ENCODE measurements at regions of chr3 and their contacts with region 1.

Region 1: GRCh38 chr3:155870133-155870944 is at the start of gene GMPS:
- DNase-seq: peak; percentile 84
- ATAC-seq: peak; percentile 93
- H3K4me3 ChIP-seq: peak within 1 kb of the TSS; percentile 98 to 99 (median 99)
- H3K27ac ChIP-seq: peak within 1 kb of the TSS; percentile 98
- H3K4me1 ChIP-seq: peaks cover 51% of the 10 kb centered on the region
- H3K27me3 ChIP-seq: no peaks in the 10 kb centered on the region; a peak in 1 of 5 replicates
- CTCF ChIP-seq: peak; percentile 85
- EP300 ChIP-seq: no peak
- POLR2A ChIP-seq: peak; percentile 75 to 88
- RAD21 ChIP-seq: peak; percentile 94
- total RNA-seq, gene GMPS: 85.5 and 133 TPM in 2 replicates

Region 2: GRCh38 chr3:155712008-155712407 is 158.3 kb before region 1 on chr3:
- CTCF ChIA-PET with region 1: no interaction called
- POLR2A ChIA-PET with region 1: interaction called, 3 read pairs
- in situ Hi-C with region 1: no loop called
- intact Hi-C with region 1: loop called (anchors 5 kb)
- DNase-seq: no peak
- ATAC-seq: no peak
- H3K4me3 ChIP-seq: no peak overlapping the region
- H3K27ac ChIP-seq: no peak overlapping the region
- H3K4me1 ChIP-seq: peaks cover 40% of the 10 kb centered on the region
- H3K27me3 ChIP-seq: no peaks in the 10 kb centered on the region
- CTCF ChIP-seq: no peak
- EP300 ChIP-seq: no peak
- POLR2A ChIP-seq: no peak
- RAD21 ChIP-seq: no peak

Region 3: GRCh38 chr3:155737844-155738460 is 132.4 kb before region 1 on chr3:
- CTCF ChIA-PET with region 1: no interaction called
- POLR2A ChIA-PET with region 1: interaction called, 6 read pairs
- in situ Hi-C with region 1: no loop called
- intact Hi-C with region 1: loop called (anchors 2 kb)
- DNase-seq: peak; percentile 90
- ATAC-seq: peak; percentile 99
- H3K4me3 ChIP-seq: peak overlapping the region; percentile 51 to 60 (median 52)
- H3K27ac ChIP-seq: peak overlapping the region; percentile 69
- H3K4me1 ChIP-seq: peaks cover 39% of the 10 kb centered on the region
- H3K27me3 ChIP-seq: no peaks in the 10 kb centered on the region; a peak in 1 of 5 replicates
- CTCF ChIP-seq: 0 out of 2 replicates have a peak, but pooled peaks have one; percentile 23
- EP300 ChIP-seq: no peak
- POLR2A ChIP-seq: peak; percentile 43 to 63; a peak in 3 of 4 replicates
- RAD21 ChIP-seq: no peak

Region 4: GRCh38 chr3:155805802-155806618 is 64.3 kb before region 1 on chr3 and contains the start of gene C3orf33:
- CTCF ChIA-PET with region 1: interaction called, 3 read pairs
- POLR2A ChIA-PET with region 1: interaction called, 32 read pairs
- in situ Hi-C with region 1: no loop called
- intact Hi-C with region 1: loop called (anchors 1 kb)
- DNase-seq: peak; percentile 30
- ATAC-seq: peak; percentile 93
- H3K4me3 ChIP-seq: peak within 1 kb of the TSS; percentile 87 to 95 (median 94)
- H3K27ac ChIP-seq: peak within 1 kb of the TSS; percentile 89
- H3K4me1 ChIP-seq: peaks cover 18% of the 10 kb centered on the region
- H3K27me3 ChIP-seq: no peaks in the 10 kb centered on the region
- CTCF ChIP-seq: peak; percentile 89
- EP300 ChIP-seq: peak in 1 of 2 experiments; percentile 3; a peak in 1 of 4 replicates
- POLR2A ChIP-seq: peak; percentile 5 to 44; a peak in 1 of 4 replicates
- RAD21 ChIP-seq: peak; percentile 86
- total RNA-seq, gene C3orf33: 8.2 and 12.6 TPM in 2 replicates

Region 5: DNA sequence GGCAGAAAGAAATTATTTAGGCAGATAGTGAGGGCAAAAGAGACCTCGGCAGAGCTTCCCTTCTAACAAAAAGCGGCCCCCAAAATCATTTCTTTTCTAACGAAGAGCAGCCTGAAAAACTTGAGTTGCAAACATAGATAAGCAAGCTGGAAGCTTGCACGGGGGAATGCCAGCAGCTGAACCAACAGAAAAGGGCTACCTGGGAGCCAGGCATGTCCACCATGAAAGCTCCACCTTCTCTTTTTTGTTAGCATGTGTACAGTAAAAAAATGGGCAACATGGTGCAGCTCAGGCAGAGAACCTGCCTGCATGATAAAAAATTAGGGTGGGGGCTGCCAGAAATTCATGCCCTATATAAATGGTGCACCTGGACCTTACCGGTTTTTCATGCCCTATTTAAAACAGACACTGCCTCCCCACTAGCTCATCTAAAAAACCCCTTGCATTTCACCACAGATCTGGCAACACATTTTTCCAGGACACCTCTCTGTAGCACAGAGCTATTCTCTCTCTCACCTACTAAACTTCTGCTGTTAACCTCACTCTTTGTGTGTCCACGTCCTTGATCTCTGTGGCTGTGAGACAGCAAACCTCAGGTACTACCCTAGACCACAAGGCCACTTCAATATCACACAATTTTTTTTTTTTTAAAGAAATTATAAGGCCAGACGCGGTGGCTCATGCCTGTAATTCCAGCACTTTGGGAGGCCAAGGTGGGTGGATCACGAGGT is 34.8 kb before region 1 on chr3:
- CTCF ChIA-PET with region 1: no interaction called
- POLR2A ChIA-PET with region 1: interaction called, 3 read pairs
- in situ Hi-C with region 1: no loop called
- intact Hi-C with region 1: loop called (anchors 1 kb)
- DNase-seq: no peak
- ATAC-seq: peak; percentile 59
- H3K4me3 ChIP-seq: no peak overlapping the region
- H3K27ac ChIP-seq: no peak overlapping the region
- H3K4me1 ChIP-seq: no peaks in the 10 kb centered on the region
- H3K27me3 ChIP-seq: no peaks in the 10 kb centered on the region
- CTCF ChIP-seq: no peak
- EP300 ChIP-seq: no peak
- POLR2A ChIP-seq: no peak
- RAD21 ChIP-seq: no peak

Region 6: GRCh38 chr3:155854141-155854940 is 16.0 kb before region 1 on chr3 and contains the start of gene SLC33A1:
- CTCF ChIA-PET with region 1: no interaction called
- POLR2A ChIA-PET with region 1: interaction called, 16 read pairs
- in situ Hi-C with region 1: no loop called
- intact Hi-C with region 1: loop called (anchors 2 kb)
- DNase-seq: peak; percentile 98
- ATAC-seq: peak; percentile 98
- H3K4me3 ChIP-seq: peak within 1 kb of the TSS; percentile 78 to 98 (median 89)
- H3K27ac ChIP-seq: peak within 1 kb of the TSS; percentile 97
- H3K4me1 ChIP-seq: peaks cover 35% of the 10 kb centered on the region
- H3K27me3 ChIP-seq: no peaks in the 10 kb centered on the region; a peak in 1 of 5 replicates
- CTCF ChIP-seq: peak; percentile 22
- EP300 ChIP-seq: peak in 1 of 2 experiments; percentile 61; a peak in 1 of 4 replicates
- POLR2A ChIP-seq: peak; percentile 86 to 94
- RAD21 ChIP-seq: peak; percentile 33; the same call in 1 of the 2 replicates
- total RNA-seq, gene SLC33A1: 23.2 and 32.1 TPM in 2 replicates

Region 7: DNA sequence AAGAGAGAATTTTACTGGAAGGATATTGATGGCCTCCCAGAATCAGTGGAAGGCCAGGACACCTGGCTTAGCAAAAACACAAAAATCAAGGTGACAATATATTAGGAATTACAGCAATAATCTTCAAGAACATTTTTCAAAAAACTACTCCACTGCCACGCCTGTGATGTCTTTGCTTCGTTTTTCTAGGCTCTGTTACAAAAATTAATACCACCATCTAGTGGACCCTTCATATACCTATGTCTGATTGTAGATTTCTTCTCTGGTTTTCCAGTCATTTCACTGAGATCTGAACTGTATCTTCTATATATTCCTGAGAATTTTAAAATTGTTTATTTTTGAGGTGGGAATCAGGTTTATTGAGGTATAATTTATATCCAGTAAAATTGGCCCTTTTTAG is 10.5 kb before region 1 on chr3:
- CTCF ChIA-PET with region 1: no interaction called
- POLR2A ChIA-PET with region 1: interaction called, 16 read pairs
- in situ Hi-C with region 1: no loop called
- intact Hi-C with region 1: loop called (anchors 2 kb)
- DNase-seq: peak; percentile 44
- ATAC-seq: peak; percentile 79
- H3K4me3 ChIP-seq: peak overlapping the region in 2 of 3 experiments; percentile 29 to 42; a peak in 3 of 6 replicates
- H3K27ac ChIP-seq: no peak overlapping the region
- H3K4me1 ChIP-seq: peaks cover 28% of the 10 kb centered on the region
- H3K27me3 ChIP-seq: no peaks in the 10 kb centered on the region
- CTCF ChIP-seq: peak; percentile 54
- EP300 ChIP-seq: no peak
- POLR2A ChIP-seq: no peak
- RAD21 ChIP-seq: no peak

Measured in HepG2 (cell line).